Colonic mucosa (tissue), 4 donors: ENCODE measurements at regions of chr1 and their contacts with region 1.

Region 1: GRCh38 chr1:109979489-109980091 is 5.0 kb upstream of the AHCYL1 start:
- DNase-seq: peak; percentile 35
- H3K4me3 ChIP-seq: no peak overlapping the region
- H3K27ac ChIP-seq: no peak overlapping the region
- H3K4me1 ChIP-seq: peaks cover 11% of the 10 kb centered on the region
- H3K27me3 ChIP-seq: no peaks in the 10 kb centered on the region
- CTCF ChIP-seq: no peak

Region 2: GRCh38 chr1:109927911-109928321 is 51.7 kb before region 1 on chr1:
- intact Hi-C with region 1: loop called (anchors 5 kb)
- DNase-seq: peak; percentile 75
- H3K4me3 ChIP-seq: no peak overlapping the region
- H3K27ac ChIP-seq: peak overlapping the region; percentile 36
- H3K4me1 ChIP-seq: peaks cover 8% of the 10 kb centered on the region
- H3K27me3 ChIP-seq: no peaks in the 10 kb centered on the region
- CTCF ChIP-seq: no peak

Region 3: GRCh38 chr1:110106013-110106941 is 126.7 kb after region 1 on chr1:
- intact Hi-C with region 1: no loop called
- DNase-seq: peak; percentile 62
- H3K4me3 ChIP-seq: no peak overlapping the region
- H3K27ac ChIP-seq: no peak overlapping the region
- H3K4me1 ChIP-seq: no peaks in the 10 kb centered on the region
- H3K27me3 ChIP-seq: no peaks in the 10 kb centered on the region
- CTCF ChIP-seq: peak; percentile 94

Region 4: DNA sequence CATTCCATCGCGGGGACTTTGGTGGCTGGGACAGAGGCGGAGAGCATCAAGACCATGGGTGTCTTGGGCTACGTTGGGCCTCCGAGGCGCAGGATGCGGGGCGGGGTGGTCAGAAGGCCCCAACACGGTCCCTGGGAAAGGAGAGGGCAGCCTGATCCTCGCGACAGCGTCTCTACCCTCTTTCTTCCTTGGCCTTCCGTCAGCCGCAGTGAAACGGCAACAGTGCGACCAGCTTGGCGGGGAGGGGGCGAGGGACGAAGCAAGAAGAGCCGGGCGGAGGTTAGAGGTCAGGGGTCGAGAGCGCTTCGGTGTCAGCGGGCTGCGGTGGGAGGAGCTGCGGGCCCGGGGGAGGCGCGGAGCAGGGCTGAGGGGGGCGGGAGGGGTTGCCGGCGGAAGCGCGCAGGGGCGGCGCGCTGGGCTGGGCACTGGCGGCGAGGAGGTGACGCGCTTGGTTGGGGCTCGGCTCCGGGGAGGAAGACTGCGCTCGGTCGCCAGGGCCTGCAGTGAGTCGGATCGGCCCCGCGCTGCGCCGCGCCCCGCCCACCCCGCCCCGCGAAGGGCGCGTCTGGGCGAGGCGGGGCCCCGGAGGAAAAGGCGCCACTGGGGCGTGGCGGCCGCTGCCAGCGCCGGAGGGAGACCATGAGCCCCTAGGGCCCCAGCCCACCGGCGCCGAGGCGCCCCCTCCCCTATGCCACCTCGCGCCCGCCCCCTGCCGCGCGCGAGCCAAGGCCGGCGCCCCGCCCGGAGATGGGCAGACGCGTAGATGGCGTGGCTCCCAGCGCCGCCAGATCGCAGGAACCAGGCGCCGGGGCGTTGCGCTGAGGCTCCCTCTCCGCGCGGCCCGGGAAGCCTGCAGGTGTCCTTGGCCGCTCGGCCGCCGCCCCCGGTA is 230.4 kb after region 1 on chr1 and contains the start of gene KCNC4:
- intact Hi-C with region 1: no loop called
- DNase-seq: peak; percentile 90
- H3K4me3 ChIP-seq: peak within 1 kb of the TSS; percentile 80
- H3K27ac ChIP-seq: peak within 1 kb of the TSS; percentile 62
- H3K4me1 ChIP-seq: no peaks in the 10 kb centered on the region
- H3K27me3 ChIP-seq: no peaks in the 10 kb centered on the region
- CTCF ChIP-seq: no peak
- total RNA-seq, gene KCNC4: 6.7 to 8.4 TPM